Vagina (tissue), 2 donors: ENCODE measurements at regions of chr18 and their contacts with region 1.

Region 1: GRCh38 chr18:60038731-60039130 is 138.9 kb downstream of the PMAIP1 start:
- DNase-seq: no peak
- H3K4me3 ChIP-seq: no peak overlapping the region
- H3K27ac ChIP-seq: no peak overlapping the region
- H3K4me1 ChIP-seq: no peaks in the 10 kb centered on the region
- H3K27me3 ChIP-seq: no peaks in the 10 kb centered on the region
- CTCF ChIP-seq: no peak
- POLR2A ChIP-seq: no peak

Region 2: DNA sequence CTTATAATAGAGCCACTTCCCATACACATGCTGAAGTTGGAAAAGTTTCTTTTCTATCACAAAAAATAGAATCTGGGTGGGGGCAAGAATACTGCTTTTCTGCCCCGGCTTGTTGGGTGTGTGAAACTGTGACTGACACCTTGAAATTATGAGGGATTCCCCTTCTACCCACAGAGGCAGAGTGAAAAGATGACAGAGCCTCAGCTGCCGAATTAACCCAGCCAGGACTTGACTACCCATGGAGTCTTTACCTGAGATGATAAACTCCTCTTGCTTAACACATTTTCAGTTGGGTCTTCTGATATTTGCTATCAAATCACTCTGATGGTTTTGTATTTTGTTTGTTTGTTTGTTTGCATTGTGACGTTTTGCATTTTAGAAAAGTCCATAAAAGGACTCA is 204.9 kb before region 1 on chr18:
- intact Hi-C with region 1: no loop called
- DNase-seq: no peak
- H3K4me3 ChIP-seq: no peak overlapping the region
- H3K27ac ChIP-seq: no peak overlapping the region
- H3K4me1 ChIP-seq: no peaks in the 10 kb centered on the region
- H3K27me3 ChIP-seq: no peaks in the 10 kb centered on the region
- CTCF ChIP-seq: no peak
- POLR2A ChIP-seq: no peak

Region 3: DNA sequence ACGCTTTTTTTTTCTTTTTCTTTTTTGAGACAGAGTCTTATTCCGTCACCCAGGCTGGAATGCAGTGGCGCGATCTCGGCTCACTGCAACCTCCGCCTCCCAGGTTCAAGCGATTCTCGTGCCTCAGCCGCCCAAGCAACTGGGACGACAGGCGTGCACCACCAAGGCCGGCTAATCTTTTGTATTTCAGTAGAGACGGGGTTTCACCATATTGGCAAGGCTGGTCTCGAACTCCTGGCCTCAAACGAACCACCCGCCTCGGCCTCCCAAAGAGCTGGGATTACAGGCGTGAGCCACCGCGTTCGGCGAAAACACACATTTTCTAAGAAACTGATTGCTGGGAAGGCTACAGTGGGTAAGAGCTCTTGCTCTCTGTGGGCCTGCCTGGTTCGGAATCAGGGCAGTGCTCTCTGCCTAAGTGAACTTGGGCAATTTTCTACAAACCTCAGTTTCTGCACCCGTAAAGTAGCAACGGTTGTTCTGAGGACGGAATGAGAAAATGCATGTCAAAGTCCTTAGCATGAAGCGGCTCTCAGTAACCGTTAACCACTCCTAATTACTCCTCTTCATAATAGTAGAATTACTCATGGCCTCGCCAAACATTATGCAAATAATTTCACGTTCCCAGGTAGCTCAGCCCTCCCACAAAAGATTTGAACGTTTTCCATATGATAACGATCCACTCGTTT is 140.0 kb before region 1 on chr18:
- intact Hi-C with region 1: no loop called
- DNase-seq: no peak
- H3K4me3 ChIP-seq: peak overlapping the region; percentile 64 to 82
- H3K27ac ChIP-seq: peak overlapping the region; percentile 87
- H3K4me1 ChIP-seq: peaks cover 12% of the 10 kb centered on the region
- H3K27me3 ChIP-seq: peaks cover 5% of the 10 kb centered on the region
- CTCF ChIP-seq: peak in 1 of 3 experiments; percentile 11
- POLR2A ChIP-seq: no peak

Region 4: GRCh38 chr18:59971871-59972428 is 66.8 kb before region 1 on chr18:
- intact Hi-C with region 1: loop called (anchors 10 kb)
- DNase-seq: no peak
- H3K4me3 ChIP-seq: no peak overlapping the region
- H3K27ac ChIP-seq: no peak overlapping the region
- H3K4me1 ChIP-seq: peaks cover 6% of the 10 kb centered on the region
- H3K27me3 ChIP-seq: no peaks in the 10 kb centered on the region
- CTCF ChIP-seq: no peak
- POLR2A ChIP-seq: no peak

Region 5: DNA sequence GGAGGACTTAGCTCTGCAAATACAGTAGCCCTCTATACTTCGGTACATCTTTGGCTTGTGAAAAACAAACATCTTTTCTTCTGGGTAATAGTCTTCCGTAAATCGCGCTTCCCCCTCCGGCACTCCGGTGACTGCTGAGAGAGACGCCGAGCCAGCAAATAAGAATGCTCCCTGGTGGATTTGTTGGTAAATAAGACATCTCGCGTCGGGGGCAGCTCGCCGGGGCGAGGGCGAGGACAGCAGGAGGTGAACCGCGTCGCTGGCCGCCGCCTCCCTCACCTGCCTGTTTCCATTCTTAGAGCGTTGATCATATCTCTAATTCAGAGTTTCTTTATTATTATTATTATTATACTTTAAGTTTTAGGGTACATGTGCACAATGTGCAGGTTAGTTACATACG is 21.4 kb before region 1 on chr18:
- intact Hi-C with region 1: no loop called
- DNase-seq: no peak
- H3K4me3 ChIP-seq: no peak overlapping the region
- H3K27ac ChIP-seq: no peak overlapping the region
- H3K4me1 ChIP-seq: no peaks in the 10 kb centered on the region
- H3K27me3 ChIP-seq: no peaks in the 10 kb centered on the region
- CTCF ChIP-seq: no peak
- POLR2A ChIP-seq: no peak